ENCODE measurements at regions of chr21 and their contacts with region 1.

Region 1: DNA sequence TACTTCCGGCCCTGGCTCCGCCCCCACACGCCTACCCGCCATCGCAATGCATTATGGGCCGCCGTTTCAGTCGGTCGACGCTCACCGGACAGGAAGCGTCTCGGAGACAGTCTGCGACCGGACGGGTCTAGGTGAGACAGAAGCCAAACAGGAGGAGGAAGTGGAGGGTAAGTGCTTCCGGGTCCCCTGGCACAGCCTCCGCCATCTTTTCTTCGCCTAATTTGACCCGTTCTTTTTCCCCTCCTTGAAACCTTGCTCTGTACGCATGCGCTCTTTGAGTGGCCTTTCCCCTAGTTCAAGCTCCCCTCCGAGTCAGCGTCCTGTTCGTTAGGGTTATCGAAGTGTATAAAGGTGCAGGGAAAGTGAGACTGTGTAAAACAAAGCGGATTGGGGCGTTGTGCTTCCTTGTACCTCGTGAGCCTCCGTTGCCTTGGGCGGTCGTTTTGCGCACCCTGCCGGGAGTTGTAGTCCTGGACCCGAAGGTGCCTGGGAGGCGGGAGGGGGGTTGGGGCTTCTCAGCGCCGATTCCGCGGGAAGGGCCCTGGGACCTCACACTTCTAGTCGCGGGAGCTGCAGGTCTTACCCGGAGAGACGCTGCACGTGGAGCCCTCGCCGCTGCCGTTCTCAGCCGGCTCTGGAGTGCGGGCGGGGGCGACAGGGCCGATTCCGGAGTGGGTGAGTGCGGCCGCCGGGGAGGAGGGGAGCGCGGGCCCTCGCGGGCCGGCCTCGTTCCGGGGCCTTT is at the starts of genes ATP5PF and GABPA:
- DNase-seq: peak; percentile 98
- H3K4me3 ChIP-seq: peak within 1 kb of the TSS; percentile 48 to 90 (median 88)
- H3K27ac ChIP-seq: peak within 1 kb of the TSS; percentile 95 to 99 (median 96)
- H3K4me1 ChIP-seq: peaks cover 17 to 43% (median 24%) of the 10 kb centered on the region in 4 donors
- H3K27me3 ChIP-seq: no peaks in the 10 kb centered on the region
- CTCF ChIP-seq: peak in 2 of 5 experiments; percentile 20 to 37
- EP300 ChIP-seq: no peak
- POLR2A ChIP-seq: peak; percentile 1
- total RNA-seq, gene ATP5PF: 56.9 to 147 (median 78.4) TPM
- total RNA-seq, gene GABPA: 5.4 to 23.3 (median 18.6) TPM

Region 2: DNA sequence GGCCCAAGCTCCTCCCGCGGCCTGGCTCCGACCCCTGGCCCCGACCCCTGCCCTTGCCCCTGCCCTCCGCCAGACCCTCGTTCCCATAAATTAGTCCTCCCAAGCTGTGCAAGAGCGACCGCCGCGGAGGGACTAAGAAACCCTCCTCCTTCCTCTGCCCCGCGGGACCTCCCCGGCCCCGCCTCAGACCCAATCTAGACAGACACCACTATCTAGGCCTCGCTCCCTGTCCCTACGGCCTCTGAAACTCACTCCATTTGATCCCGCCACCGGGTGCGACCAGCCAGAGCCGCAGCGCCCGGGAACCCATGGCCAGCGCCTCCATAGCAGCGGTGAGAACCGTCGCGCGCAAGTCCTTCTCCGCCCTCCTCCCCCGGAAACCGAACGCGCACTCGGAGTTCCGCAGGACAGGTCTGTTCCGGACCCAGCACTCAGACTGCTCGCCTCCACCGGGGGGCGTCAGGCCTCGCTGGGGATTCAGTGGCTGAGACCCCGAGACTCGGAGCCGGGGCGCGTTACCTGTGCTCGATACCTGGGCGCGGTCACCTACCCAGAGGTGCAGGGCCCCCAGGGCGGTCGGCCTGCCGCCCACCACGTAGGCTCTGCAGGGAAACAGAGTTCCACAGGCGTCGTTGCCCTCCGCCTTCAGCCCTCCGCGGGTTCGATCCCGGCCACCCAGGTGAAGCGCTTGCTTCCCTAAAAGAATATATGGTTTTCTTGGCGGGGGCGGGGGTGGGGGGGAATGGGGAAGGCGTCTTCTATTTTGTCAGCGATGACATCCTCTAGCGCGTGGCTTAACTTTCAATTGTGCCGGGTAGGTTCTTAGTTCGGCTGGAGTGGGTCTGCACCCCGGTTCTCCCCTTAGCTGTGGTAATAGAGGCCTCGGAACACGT is 127.7 kb before region 1 on chr21 and contains the start of gene MRPL39:
- in situ Hi-C with region 1: no loop called
- intact Hi-C with region 1: loop called (anchors 10 kb)
- DNase-seq: peak; percentile 89
- H3K4me3 ChIP-seq: peak within 1 kb of the TSS; percentile 70 to 95 (median 74)
- H3K27ac ChIP-seq: peak within 1 kb of the TSS; percentile 78 to 88 (median 84)
- H3K4me1 ChIP-seq: peaks cover 9 to 31% (median 11%) of the 10 kb centered on the region in 4 donors
- H3K27me3 ChIP-seq: no peaks in the 10 kb centered on the region
- CTCF ChIP-seq: peak; percentile 36 to 71 (median 50)
- EP300 ChIP-seq: no peak
- POLR2A ChIP-seq: peak; percentile 55
- total RNA-seq, gene MRPL39: 10.1 to 16.8 (median 14.9) TPM in 3 of 4 donors, not detected in the other